ENCODE measurements at regions of chr2 and their contacts with region 1.

Region 1: DNA sequence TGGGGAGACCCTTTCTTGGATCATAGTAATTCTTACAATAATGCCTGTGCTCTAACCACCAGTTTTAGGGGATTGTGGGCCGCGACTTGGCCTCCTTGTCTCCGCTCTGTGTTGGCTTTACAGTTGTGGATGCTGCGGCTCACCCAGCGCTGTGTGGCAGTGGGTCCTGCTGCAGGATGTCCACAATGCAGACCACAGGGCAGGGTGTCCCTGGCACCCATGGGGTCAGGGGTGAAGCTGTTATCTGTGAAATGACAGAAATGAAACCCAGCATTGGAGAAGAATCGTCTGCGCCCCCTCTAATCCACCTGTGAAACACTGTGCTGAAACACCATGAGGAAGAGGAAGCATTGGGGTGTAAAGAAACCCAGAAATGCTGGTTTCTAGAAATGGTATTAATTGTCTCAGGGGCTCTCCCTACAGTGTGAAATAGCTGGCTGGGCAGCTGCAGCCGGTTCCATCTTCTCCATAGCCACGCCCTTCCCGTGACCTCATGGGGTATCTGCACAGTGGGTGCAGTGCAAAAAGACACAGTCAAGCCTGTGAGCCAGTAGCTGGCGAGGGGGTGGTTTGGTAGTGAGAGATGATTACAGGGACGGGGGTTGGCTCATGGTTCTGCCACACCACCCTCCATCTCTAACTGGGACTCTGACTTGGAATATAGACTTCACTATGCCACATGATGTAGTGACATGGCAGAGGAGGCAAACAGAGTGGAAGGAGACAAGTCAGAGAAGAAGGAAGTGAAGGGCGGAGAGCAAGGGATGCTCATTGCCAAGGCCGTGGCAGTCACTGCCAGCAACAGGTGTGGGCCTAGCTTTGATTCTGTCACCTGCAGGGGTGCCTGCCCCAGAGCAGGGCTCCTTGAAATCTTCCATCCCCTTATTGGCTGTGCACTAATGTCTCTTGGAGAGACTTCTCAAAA is 16.2 kb downstream of the INPP4A start:
- DNase-seq: peak; percentile 69
- H3K4me3 ChIP-seq: peak overlapping the region; percentile 31
- H3K27ac ChIP-seq: peak overlapping the region; percentile 53
- H3K4me1 ChIP-seq: peaks cover 49% of the 10 kb centered on the region
- CTCF ChIP-seq: no peak

Region 2: GRCh38 chr2:98487806-98488651 is 27.2 kb after region 1 on chr2:
- CTCF ChIA-PET with region 1: interaction called, 6 read pairs
- POLR2A ChIA-PET with region 1: interaction called, 5 read pairs
- intact Hi-C with region 1: loop called (anchors 1 kb)
- DNase-seq: peak; percentile 59
- H3K4me3 ChIP-seq: no peak overlapping the region
- H3K27ac ChIP-seq: no peak overlapping the region
- H3K4me1 ChIP-seq: peaks cover 37% of the 10 kb centered on the region
- CTCF ChIP-seq: peak; percentile 83

Region 3: DNA sequence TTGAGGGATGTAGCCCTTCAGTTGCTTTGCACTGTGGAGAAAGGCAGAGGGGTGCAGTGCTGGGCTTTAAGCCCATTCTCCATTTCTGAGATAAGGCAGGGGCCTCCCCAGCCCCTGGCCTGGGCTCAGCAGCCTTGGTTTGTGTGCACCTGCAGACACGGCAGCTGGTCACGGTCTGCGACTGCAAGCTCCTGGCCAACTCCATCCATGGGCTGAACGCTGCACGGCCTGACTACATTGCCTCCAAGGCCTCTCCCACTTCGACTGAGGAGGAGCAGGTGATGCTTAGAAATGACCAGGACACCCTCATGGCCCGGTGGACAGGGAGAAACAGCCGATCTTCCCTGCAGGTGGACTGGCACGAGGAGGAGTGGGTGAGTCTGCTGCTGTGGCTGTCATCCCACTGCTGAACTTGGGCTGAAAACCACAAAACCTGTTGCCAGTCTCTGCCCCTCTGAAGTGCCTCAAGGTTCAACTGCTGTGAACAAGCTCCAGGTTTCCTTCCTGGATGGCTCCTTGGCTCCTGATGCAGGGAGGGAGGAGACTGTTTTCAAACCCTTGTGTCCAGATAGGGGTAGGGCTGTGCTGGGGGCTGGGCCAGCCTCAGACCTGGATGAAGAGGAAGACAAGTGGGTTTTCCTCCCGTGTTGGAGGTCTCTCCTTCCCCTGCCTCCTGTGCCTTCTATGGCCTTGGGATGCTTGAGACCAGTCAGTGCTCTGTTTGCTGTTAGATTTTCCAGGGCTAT is 93.5 kb after region 1 on chr2:
- CTCF ChIA-PET with region 1: no interaction called
- POLR2A ChIA-PET with region 1: interaction called, 3 read pairs
- intact Hi-C with region 1: loop called (anchors 1 kb)
- DNase-seq: peak; percentile 71
- H3K4me3 ChIP-seq: peak overlapping the region; percentile 3
- H3K27ac ChIP-seq: peak overlapping the region; percentile 80
- H3K4me1 ChIP-seq: peaks cover 81% of the 10 kb centered on the region
- CTCF ChIP-seq: no peak

Measured in OCI-LY7 (cell line).